ENCODE measurements at regions of chr5 and their contacts with region 1.

Region 1: DNA sequence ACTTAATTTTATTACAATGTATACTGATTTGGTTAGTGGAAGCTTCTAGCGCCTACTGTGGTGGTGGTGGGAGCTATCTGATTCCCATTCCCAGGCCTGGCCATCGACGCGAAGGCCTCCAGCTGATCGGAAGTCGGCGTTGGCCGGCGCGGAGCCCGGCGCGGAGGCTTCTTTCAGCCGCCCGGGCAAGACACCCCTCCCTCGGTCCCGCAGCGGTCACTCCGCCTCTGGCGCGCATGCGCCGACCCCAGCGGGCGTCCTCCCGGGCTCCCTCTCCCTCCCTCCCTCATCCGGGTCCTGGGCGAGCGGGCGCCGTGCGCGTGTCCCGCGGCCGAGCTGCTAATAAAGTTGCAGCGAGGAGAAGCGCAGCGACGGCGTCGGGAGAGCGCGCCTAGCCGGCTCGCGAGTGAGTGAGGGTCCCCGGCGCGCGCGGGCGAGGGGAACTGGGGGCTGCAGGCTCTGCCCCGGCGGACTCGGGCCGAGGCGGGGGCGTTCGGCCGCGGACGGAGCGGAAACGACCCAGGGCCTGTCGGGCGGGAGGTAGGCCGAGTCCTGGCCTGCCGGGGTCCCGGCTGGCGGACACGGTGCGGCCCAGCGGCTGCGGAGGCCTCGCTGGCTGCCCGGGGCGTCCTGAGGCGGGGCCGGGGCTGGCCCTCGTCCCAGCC is at the start of gene SMAD5:
- DNase-seq: peak; percentile 91 to 95
- H3K4me3 ChIP-seq: peak within 1 kb of the TSS; percentile 92 to 95 (median 94)
- H3K27ac ChIP-seq: peak within 1 kb of the TSS; percentile 96 to 98
- H3K4me1 ChIP-seq: peaks cover 0 to 17% of the 10 kb centered on the region in 2 donors
- H3K27me3 ChIP-seq: no peaks in the 10 kb centered on the region
- CTCF ChIP-seq: no peak
- POLR2A ChIP-seq: peak; percentile 53
- total RNA-seq, gene SMAD5: 45.6 to 63.7 (median 52.4) TPM

Region 2: DNA sequence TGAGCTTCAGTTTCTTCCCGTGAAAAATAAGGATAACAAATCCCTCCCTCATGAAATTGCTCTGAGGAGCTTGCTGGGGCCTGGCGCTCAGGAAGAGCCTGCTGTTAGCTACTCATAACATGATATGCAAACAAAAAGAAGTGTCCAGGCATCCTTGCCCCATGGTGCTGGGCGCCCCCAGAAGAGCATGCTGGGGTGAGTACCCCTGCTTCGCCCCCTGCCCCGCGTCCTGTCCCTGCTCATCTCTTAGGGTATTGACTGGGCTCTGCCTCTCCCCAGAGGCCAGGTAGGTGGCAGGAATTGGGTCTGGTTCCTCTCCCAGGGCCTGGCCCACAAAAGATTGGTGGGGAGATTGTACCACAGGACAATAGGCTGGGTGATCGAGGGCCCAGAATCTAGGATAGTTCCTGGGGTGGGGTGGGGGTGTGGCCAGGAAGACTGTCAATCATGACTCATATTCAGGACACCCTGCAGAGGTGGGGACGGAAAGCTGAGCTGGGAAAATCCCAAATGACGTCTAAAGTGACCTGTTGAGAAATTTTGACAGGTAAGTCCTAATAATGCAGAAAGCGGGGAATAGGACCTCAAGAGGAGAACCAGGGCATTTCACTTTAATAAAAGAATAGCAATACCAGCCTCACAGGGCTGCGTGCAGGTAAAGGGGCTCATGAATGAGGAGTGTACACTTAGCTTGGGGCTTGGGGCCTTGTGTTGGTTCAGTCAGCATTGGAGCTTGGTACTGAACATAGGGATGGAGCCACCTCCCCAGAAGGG is 1107.5 kb before region 1 on chr5:
- intact Hi-C with region 1: loop called (anchors 5 kb)
- DNase-seq: no peak
- H3K4me3 ChIP-seq: no peak overlapping the region
- H3K27ac ChIP-seq: no peak overlapping the region
- H3K4me1 ChIP-seq: no peaks in the 10 kb centered on the region
- H3K27me3 ChIP-seq: peaks cover 0 to 32% of the 10 kb centered on the region in 2 donors
- CTCF ChIP-seq: no peak
- POLR2A ChIP-seq: no peak